ENCODE measurements at regions of chr4 and their contacts with region 1.

Region 1: DNA sequence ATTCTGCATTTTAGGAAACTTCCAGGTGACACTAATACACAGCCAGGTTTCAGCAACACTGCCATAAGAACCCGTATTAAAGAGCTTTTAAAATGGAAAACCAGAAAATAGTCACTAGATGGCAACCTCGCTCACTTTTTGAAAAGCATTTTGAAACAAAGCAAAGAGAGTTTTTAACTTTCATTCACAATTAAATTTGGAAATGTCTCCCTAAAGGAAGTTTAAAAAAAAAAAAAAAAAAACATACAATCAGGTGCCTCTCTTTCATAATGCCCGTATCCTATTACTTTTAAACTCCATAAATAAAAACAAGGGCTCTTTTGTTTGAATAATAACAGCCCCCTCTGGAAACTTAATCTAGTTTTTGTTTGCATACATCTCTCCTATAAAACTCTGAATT is 20.3 kb downstream of the MEPE start:
- DNase-seq: peak in 1 of 4 donors; percentile 14
- ATAC-seq: peak; percentile 57
- H3K4me3 ChIP-seq: no peak overlapping the region
- H3K27ac ChIP-seq: peak overlapping the region in 2 of 4 donors; percentile 48 to 54
- H3K4me1 ChIP-seq: peaks cover 10% of the 10 kb centered on the region
- H3K27me3 ChIP-seq: no peaks in the 10 kb centered on the region
- CTCF ChIP-seq: peak in 6 of 7 experiments; percentile 40 to 71 (median 61)
- POLR2A ChIP-seq: no peak

Region 2: DNA sequence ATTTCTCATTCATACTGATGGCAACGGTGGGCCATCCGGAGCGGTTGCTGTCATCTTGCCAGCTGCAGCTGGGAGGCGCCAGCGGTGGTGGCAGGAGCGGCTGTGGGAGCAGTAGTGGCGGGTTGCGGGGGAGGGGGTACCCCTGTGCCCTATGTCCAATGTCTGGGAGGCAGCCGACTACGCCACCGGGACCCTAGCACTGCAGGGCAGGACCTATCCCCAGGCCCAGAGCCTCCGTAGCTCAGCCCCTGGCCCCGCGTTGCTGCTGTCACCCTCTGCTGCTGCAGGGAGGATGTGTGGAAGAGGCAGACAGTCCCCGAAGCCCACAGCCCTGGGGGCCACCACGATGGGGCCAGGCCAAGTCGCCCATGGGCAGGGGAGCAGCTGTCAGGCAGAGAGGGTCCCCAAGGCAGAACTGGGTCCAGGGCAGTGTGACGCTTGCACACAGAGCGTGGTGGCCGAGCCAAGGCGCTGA is 112.4 kb after region 1 on chr4:
- intact Hi-C with region 1: loop called (anchors 5 kb)
- DNase-seq: no peak
- ATAC-seq: no peak
- H3K4me3 ChIP-seq: no peak overlapping the region
- H3K27ac ChIP-seq: no peak overlapping the region
- H3K4me1 ChIP-seq: no peaks in the 10 kb centered on the region
- H3K27me3 ChIP-seq: no peaks in the 10 kb centered on the region
- CTCF ChIP-seq: no peak
- POLR2A ChIP-seq: no peak

Region 3: DNA sequence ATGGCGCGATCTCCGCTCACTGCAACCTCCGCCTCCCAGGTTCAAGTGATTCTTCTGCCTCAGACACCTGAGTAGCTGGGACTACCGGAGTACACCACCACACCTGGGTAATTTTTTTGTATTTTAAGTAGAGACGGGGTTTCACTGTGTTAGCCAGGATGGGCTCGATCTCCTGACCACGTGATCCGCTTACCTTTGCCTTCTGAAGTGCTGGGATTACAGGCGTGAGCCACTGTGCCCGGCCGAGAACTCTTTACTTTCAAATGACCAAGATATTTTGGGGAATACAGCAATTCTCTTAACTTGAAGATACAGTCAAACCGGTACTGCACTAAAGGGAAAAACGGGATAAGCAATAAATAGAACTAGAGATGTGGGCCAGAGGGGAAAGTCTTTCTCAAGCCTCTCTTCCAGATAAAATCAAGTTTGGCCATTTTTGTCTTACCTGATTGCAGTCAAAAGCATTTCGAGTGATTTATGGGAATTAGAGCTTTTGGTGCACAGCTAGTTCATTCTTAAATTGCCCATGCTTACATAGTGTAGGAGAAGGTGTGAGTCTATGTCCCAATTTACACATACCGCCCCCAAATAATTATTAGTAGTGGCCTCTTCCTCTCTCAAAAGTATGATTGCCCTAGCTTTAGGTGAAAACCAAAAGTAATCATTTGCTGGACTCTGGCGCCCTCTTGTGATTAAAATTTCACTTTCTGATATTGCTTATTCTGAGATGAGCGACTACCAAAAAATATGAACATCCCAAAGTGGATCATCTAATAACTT is 358.6 kb after region 1 on chr4:
- intact Hi-C with region 1: loop called (anchors 10 kb)
- DNase-seq: peak; percentile 28 to 57 (median 40)
- ATAC-seq: no peak
- H3K4me3 ChIP-seq: no peak overlapping the region
- H3K27ac ChIP-seq: no peak overlapping the region
- H3K4me1 ChIP-seq: peaks cover 8% of the 10 kb centered on the region
- H3K27me3 ChIP-seq: no peaks in the 10 kb centered on the region
- CTCF ChIP-seq: peak; percentile 65 to 89 (median 78)
- POLR2A ChIP-seq: no peak

Region 4: GRCh38 chr4:88230969-88231771 is 378.1 kb after region 1 on chr4:
- intact Hi-C with region 1: no loop called
- DNase-seq: no peak
- ATAC-seq: no peak
- H3K4me3 ChIP-seq: no peak overlapping the region
- H3K27ac ChIP-seq: peak overlapping the region in 1 of 4 donors; percentile 13
- H3K4me1 ChIP-seq: no peaks in the 10 kb centered on the region
- H3K27me3 ChIP-seq: no peaks in the 10 kb centered on the region
- CTCF ChIP-seq: no peak
- POLR2A ChIP-seq: no peak

Measured in body of pancreas (tissue), 4 donors.